Gastrocnemius medialis (tissue), 4 donors: ENCODE measurements at regions of chr22 and their contacts with region 1.

Region 1: GRCh38 chr22:36277482-36278291 is 24.8 kb downstream of the APOL1 start:
- DNase-seq: peak in 1 of 2 donors; percentile 41
- ATAC-seq: peak; percentile 54 to 74
- H3K4me3 ChIP-seq: no peak overlapping the region
- H3K27ac ChIP-seq: no peak overlapping the region
- H3K4me1 ChIP-seq: peaks cover 0 to 6% of the 10 kb centered on the region in 2 donors
- H3K27me3 ChIP-seq: no peaks in the 10 kb centered on the region
- CTCF ChIP-seq: peak; percentile 35 to 85 (median 68)
- POLR2A ChIP-seq: no peak

Region 2: GRCh38 chr22:36027935-36028645 is 249.6 kb before region 1 on chr22:
- in situ Hi-C with region 1: no loop called
- intact Hi-C with region 1: no loop called
- DNase-seq: peak in 1 of 2 donors; percentile 2
- ATAC-seq: peak; percentile 57
- H3K4me3 ChIP-seq: peak overlapping the region; percentile 72 to 80 (median 74)
- H3K27ac ChIP-seq: peak overlapping the region; percentile 83 to 92 (median 86)
- H3K4me1 ChIP-seq: peaks cover 13 to 15% of the 10 kb centered on the region in 2 donors
- H3K27me3 ChIP-seq: no peaks in the 10 kb centered on the region
- CTCF ChIP-seq: no peak
- POLR2A ChIP-seq: no peak

Region 3: GRCh38 chr22:36246718-36247117 is 31.0 kb before region 1 on chr22:
- in situ Hi-C with region 1: no loop called
- intact Hi-C with region 1: loop called (anchors 2 kb)
- DNase-seq: no peak
- ATAC-seq: no peak
- H3K4me3 ChIP-seq: no peak overlapping the region
- H3K27ac ChIP-seq: no peak overlapping the region
- H3K4me1 ChIP-seq: peaks cover 10 to 19% of the 10 kb centered on the region in 2 donors
- H3K27me3 ChIP-seq: no peaks in the 10 kb centered on the region
- CTCF ChIP-seq: no peak
- POLR2A ChIP-seq: no peak

Region 4: DNA sequence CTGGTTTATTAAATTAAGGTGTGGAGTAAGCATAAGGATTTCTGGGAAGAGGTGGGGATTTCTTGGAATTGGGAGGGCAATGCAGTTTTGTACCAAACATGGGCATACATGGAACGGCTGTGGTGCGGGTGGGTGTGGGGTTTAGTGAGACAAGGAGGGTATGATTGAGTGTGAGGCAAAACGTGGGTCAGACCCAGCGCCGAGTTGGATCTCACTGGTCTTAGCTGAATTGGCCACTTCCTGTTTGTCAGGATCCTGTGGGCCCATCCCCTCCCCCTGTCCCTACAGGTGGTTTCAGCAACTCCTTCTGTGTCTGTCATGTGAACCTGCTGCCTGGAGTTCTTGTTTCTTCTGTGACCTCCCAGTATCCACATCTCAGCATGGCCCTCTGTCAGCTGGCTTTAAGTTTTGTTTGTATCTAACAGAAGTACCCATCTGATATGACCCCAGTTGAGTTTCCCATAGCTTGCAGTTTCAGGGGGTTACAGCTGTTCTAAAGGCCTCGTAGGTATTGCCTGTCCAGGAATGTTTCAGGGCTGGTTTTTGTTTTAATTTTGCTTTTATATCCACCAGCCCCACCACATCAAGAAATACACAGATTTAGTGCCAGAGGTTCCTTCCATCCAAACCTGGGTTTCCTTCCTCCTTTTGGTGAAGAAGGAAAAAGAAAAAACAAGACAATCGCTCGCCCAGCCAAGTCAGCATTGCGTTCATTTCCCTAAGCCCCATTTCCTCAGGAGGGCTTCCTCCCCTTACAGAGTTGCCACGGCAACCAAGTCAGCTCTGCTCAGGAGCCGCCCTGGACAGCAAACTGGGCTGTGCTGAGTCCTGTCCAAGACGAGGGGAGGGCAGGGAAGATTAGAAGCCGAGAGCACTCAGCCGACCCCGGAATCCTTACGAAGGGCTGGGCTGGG is 18.7 kb before region 1 on chr22:
- in situ Hi-C with region 1: no loop called
- intact Hi-C with region 1: no loop called
- DNase-seq: no peak
- ATAC-seq: no peak
- H3K4me3 ChIP-seq: no peak overlapping the region
- H3K27ac ChIP-seq: peak overlapping the region; percentile 33 to 55 (median 50)
- H3K4me1 ChIP-seq: peaks cover 5 to 9% of the 10 kb centered on the region in 2 donors
- H3K27me3 ChIP-seq: no peaks in the 10 kb centered on the region
- CTCF ChIP-seq: no peak
- POLR2A ChIP-seq: no peak